Calu3 (cell line): ENCODE measurements at regions of chr11 and their contacts with region 1.

Region 1: DNA sequence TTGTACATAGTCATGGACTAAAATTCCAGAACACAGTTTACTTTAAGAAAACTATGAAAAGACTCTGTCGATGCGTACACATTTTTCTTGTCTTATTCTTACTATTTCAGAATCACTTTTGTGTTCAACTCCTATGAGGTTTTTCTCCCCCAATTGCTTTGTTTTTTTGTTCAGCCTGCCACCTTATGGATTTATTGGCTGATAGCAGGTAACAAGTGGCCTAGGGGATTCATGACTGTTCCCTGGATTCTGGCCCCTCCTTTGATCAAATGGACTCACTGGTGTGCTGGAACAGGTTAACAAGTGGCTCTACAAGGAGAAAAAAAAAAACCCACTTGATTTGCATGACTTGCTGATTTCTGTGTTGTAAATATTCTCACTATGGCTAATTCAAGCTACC is 10.6 kb downstream of the MMP20 start:
- DNase-seq: no peak
- H3K4me3 Mint-ChIP-seq: no peak overlapping the region
- H3K27ac Mint-ChIP-seq: no peak overlapping the region
- H3K4me1 Mint-ChIP-seq: peaks cover 35% of the 10 kb centered on the region
- H3K27me3 Mint-ChIP-seq: no peaks in the 10 kb centered on the region
- CTCF ChIP-seq: no peak

Region 2: GRCh38 chr11:102341844-102342318 is 272.6 kb before region 1 on chr11:
- CTCF ChIA-PET with region 1: interaction called, 6 read pairs
- intact Hi-C with region 1: loop called (anchors 5 kb)
- DNase-seq: peak; percentile 65
- H3K4me3 Mint-ChIP-seq: no peak overlapping the region
- H3K27ac Mint-ChIP-seq: peak overlapping the region; percentile 15
- H3K4me1 Mint-ChIP-seq: peaks cover 27% of the 10 kb centered on the region
- H3K27me3 Mint-ChIP-seq: no peaks in the 10 kb centered on the region
- CTCF ChIP-seq: peak; percentile 54

Region 3: DNA sequence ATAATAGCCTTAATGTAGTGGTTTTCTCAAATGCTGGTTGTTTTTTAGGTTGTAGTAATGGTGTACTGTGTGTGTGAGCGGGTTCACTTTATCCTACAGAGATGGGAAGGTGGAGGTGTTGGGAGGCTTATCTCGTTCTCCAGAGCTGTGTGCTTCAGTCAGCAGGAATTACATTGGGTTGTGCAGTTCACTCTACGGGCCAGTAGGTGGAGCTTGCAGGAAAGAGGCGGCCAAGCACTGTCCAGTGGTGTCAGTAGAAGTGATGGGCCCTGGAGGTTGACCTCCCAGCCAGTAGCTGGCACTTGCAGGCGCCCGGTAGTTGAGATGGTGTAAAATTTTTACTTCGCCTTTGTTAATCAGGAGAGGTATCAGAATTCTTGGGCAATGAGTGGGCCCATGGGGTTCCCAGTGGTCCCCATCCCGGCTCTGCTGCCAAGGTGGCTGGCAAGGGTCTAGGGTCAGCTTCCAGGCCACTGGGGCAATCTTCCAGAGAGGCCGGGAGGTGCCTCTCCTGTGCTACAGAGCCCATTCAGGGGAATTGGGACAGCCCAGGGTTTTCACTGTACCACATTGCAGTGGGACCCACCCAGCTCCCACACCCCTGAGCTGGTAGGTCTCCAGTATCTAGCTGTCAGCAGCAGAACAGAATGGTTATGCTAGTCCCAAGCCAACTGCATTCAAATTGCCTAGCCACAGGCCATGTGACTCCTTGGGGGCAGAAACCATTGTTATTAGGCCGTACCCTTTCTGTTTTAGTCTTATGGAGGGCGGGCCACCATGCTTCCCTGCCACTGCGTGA is 223.6 kb before region 1 on chr11:
- CTCF ChIA-PET with region 1: interaction called, 15 read pairs
- intact Hi-C with region 1: loop called (anchors 1 kb)
- DNase-seq: peak; percentile 64
- H3K4me3 Mint-ChIP-seq: no peak overlapping the region
- H3K27ac Mint-ChIP-seq: no peak overlapping the region
- H3K4me1 Mint-ChIP-seq: peaks cover 15% of the 10 kb centered on the region
- H3K27me3 Mint-ChIP-seq: no peaks in the 10 kb centered on the region
- CTCF ChIP-seq: peak; percentile 77

Region 4: DNA sequence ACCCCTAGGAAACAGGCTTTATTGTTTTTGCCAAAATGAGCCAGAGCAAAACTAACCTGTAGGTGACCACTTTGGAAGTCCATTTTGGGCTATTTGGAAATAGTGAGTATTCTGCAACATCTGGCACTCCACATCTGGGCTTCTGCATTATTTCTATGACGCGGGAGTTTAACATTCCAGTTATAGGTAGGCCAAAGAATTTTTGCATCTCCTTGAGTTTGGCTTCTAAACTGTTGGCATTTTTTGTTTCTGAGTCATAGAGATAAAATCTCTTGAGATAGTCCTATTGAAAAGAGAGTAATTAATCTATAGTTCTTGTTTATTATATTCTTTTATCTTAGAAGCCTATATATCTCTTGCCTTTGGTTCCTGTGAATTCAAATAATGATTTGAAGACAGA is 86.8 kb before region 1 on chr11:
- CTCF ChIA-PET with region 1: interaction called, 3 read pairs
- intact Hi-C with region 1: loop called (anchors 5 kb)
- DNase-seq: no peak
- H3K4me3 Mint-ChIP-seq: peak overlapping the region; percentile 69
- H3K27ac Mint-ChIP-seq: peak overlapping the region; percentile 39
- H3K4me1 Mint-ChIP-seq: peaks cover 22% of the 10 kb centered on the region
- H3K27me3 Mint-ChIP-seq: no peaks in the 10 kb centered on the region
- CTCF ChIP-seq: no peak

Region 5: GRCh38 chr11:102577182-102577581 is 37.3 kb before region 1 on chr11:
- CTCF ChIA-PET with region 1: no interaction called
- intact Hi-C with region 1: no loop called
- DNase-seq: no peak
- H3K4me3 Mint-ChIP-seq: no peak overlapping the region
- H3K27ac Mint-ChIP-seq: no peak overlapping the region
- H3K4me1 Mint-ChIP-seq: peaks cover 22% of the 10 kb centered on the region
- H3K27me3 Mint-ChIP-seq: no peaks in the 10 kb centered on the region
- CTCF ChIP-seq: no peak

Region 6: GRCh38 chr11:102666331-102666957 is 52.0 kb after region 1 on chr11:
- CTCF ChIA-PET with region 1: interaction called, 16 read pairs
- intact Hi-C with region 1: loop called (anchors 2 kb)
- DNase-seq: peak; percentile 28
- H3K4me3 Mint-ChIP-seq: no peak overlapping the region
- H3K27ac Mint-ChIP-seq: no peak overlapping the region
- H3K4me1 Mint-ChIP-seq: no peaks in the 10 kb centered on the region
- H3K27me3 Mint-ChIP-seq: no peaks in the 10 kb centered on the region
- CTCF ChIP-seq: peak; percentile 57